ENCODE measurements at regions of chr3 and their contacts with region 1.

Region 1: DNA sequence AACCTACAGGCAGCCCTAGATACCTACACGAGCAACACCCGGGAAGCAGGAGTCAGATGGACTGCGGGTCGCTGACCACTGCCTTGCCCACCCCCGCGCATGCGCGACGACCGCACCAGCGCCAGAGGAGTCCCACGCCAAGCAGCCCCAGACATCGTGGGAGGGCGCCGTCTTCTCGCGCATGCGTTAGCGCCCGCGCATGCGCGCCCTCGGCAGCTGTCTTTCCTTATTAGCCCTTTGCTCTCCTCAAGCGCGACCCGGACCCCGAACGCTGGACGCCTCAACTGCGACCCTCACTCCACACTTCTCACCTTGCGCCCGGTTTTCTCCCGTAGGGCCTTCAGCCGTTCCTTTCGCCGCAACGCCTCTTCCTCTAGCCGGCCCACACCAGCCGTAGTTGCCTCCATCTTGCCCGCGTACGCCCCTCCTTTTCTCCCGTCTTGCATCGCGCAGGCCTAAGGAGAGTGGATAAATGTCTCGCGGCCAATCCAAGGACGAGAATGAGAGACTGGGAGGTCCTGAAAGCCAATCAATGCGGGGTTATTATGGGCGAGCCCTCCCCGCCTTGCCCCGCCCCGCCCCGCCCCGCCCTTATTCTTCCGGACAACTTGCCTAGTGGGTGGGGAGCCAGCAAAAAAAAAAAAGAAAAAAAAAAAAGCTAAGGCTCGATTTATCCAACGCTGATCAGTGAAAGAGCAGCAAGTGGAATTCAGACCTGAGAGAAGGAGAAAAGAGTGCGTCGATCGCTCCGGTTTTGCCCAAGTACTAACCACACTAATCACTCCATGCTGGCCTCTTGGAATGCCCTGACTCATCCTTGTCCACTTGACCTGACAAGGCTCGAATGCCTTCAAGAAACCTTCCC is at the start of gene CCDC12:
- DNase-seq: peak; percentile 98
- ATAC-seq: peak; percentile 75
- H3K4me3 ChIP-seq: peak within 1 kb of the TSS; percentile 63 to 91 (median 85)
- H3K4me3 Mint-ChIP-seq: peak within 1 kb of the TSS; percentile 96
- H3K27ac ChIP-seq: peak within 1 kb of the TSS; percentile 75 to 88
- H3K27ac Mint-ChIP-seq: peak within 1 kb of the TSS; percentile 97
- H3K4me1 ChIP-seq: peaks cover 69 to 87% of the 10 kb centered on the region in 2 donors
- H3K4me1 Mint-ChIP-seq: peaks cover 69% of the 10 kb centered on the region
- H3K27me3 ChIP-seq: no peaks in the 10 kb centered on the region
- H3K27me3 Mint-ChIP-seq: no peaks in the 10 kb centered on the region
- CTCF ChIP-seq: no peak
- total RNA-seq, gene CCDC12: 97.3 and 99.0 TPM in 2 replicates

Region 2: DNA sequence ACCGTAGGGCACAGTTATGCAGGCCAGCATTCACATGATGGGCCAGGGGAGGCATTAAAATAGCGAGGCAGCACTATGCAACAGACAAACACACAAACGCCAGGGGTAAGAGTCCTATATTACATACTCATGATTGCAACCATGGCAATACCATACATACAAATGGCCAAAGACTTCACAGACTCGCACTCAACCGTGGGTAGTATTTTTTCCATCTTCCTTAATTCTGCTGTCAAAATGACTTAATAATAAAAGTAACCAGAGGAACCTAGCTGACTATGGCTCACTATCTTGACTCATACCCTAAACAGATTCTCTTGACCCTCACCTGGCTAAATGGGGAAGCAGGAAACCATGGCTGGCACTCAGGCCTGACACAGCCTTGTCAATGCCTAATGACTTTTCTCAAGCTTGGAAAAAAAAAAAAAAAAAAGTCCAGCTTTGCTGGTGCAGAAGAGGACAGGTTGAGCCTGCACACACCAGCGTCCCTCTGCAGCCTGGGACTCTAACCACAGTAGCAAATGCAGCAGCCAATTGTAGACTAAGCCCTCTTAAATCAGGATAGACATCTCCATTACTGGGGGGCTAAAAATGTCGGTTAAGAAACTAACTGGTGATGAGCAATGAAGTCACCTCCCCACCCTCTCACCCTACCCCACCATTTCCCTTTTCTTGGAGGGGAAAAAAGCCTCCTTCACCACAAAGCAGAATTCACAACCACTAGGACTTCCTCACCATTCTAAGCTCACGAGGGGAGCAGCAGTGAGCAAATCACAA is 23.1 kb before region 1 on chr3:
- CTCF ChIA-PET with region 1: no interaction called
- POLR2A ChIA-PET with region 1: interaction called, 6 read pairs
- intact Hi-C with region 1: loop called (anchors 1 kb)
- DNase-seq: peak; percentile 69
- ATAC-seq: peak; percentile 75
- H3K4me3 ChIP-seq: no peak overlapping the region
- H3K4me3 Mint-ChIP-seq: peak overlapping the region; percentile 64
- H3K27ac ChIP-seq: peak overlapping the region; percentile 66 to 83
- H3K27ac Mint-ChIP-seq: peak overlapping the region; percentile 80
- H3K4me1 ChIP-seq: peaks cover 75 to 89% of the 10 kb centered on the region in 2 donors
- H3K4me1 Mint-ChIP-seq: peaks cover 88% of the 10 kb centered on the region
- H3K27me3 ChIP-seq: no peaks in the 10 kb centered on the region
- H3K27me3 Mint-ChIP-seq: no peaks in the 10 kb centered on the region
- CTCF ChIP-seq: no peak

Region 3: DNA sequence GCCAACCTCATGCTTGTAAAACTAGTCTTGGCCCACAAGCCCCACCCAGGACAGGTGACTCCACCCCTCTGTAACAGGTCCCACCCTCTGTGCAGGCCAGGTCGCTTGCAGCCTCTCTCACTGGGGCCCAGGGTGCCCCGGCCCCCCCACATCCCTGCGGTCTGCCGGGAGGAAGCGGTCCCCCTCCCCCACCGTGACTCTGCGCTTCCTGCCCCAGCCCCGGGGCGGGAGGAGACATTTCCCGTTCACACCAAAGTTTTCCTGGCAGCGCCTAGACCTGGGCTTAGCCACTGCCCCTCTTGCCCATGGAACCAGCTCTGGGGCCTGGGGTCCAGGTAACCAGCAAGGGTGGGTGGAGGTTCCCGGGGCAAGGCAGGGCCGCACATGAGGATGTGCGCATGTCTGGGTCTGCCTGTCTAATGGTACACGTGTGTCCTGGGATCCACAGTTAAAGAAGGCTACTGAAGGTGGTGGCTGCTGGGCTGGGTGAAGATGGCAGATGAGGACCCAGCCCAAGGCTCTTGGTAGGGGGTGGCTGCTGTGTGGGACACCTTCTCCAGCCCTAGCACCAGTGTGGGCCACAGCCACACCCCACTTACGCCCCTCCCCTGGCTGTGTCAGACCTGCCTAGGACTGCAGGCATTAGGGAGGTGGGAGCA is 11.3 kb after region 1 on chr3:
- CTCF ChIA-PET with region 1: interaction called, 10 read pairs
- POLR2A ChIA-PET with region 1: interaction called, 6 read pairs
- intact Hi-C with region 1: loop called (anchors 1 kb)
- DNase-seq: peak; percentile 86
- ATAC-seq: peak; percentile 89
- H3K4me3 ChIP-seq: peak overlapping the region in 4 of 5 experiments; percentile 21 to 41 (median 29)
- H3K4me3 Mint-ChIP-seq: peak overlapping the region; percentile 70
- H3K27ac ChIP-seq: peak overlapping the region; percentile 36 to 64
- H3K27ac Mint-ChIP-seq: peak overlapping the region; percentile 90
- H3K4me1 ChIP-seq: peaks cover 50 to 59% of the 10 kb centered on the region in 2 donors
- H3K4me1 Mint-ChIP-seq: peaks cover 71% of the 10 kb centered on the region
- H3K27me3 ChIP-seq: no peaks in the 10 kb centered on the region
- H3K27me3 Mint-ChIP-seq: no peaks in the 10 kb centered on the region
- CTCF ChIP-seq: no peak

Region 4: DNA sequence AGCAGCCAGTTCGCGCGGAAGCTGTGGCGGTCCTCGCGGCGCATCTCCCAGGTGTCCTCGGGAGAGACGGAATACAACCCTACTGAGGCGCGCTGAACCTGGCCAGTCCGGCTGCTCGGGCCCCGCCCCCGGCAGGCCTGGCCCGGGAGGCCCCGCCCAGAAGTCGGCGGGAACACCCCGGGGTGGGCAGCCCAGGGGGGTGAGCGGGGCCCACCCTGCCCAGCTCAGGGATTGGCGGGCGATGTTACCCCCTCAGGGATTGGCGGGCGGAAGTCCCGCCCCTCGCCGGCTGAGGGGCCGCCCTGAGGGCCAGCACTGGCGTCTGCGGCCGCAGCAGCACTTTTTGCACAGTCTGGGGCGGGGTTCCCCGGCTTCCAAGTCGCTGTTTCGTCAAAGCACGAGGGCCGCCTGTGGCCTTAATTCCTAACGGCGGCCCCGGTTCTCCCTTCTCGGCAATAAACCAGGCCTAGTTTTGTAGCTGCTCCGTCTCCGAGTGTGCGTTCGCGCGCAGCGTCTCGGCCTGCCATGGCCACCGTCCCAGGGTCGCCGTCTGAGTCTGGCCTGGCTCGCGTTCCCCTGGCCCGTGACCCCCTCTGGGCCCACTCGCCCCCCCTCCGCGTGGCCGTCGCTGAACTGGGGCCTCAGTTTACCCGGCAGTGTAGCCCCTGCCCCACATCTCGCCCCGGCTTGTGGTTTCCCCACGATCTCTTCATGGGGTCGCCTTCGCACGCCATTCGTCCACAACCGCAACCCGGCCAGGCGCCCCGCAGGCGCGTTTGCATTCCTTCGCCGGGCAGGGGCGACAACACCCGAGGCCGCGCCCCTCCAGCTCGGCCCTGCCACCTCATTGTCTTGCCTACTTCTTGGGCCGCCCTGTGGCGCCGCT is 32.9 kb after region 1 on chr3:
- CTCF ChIA-PET with region 1: interaction called, 3 read pairs
- POLR2A ChIA-PET with region 1: interaction called, 6 read pairs
- intact Hi-C with region 1: loop called (anchors 1 kb)
- DNase-seq: peak; percentile 88
- ATAC-seq: peak; percentile 97
- H3K4me3 ChIP-seq: peak overlapping the region in 4 of 5 experiments; percentile 50 to 68 (median 64)
- H3K4me3 Mint-ChIP-seq: peak overlapping the region; percentile 86
- H3K27ac ChIP-seq: peak overlapping the region; percentile 24 to 90
- H3K27ac Mint-ChIP-seq: peak overlapping the region; percentile 86
- H3K4me1 ChIP-seq: peaks cover 6 to 17% of the 10 kb centered on the region in 2 donors
- H3K4me1 Mint-ChIP-seq: peaks cover 10% of the 10 kb centered on the region
- H3K27me3 ChIP-seq: no peaks in the 10 kb centered on the region
- H3K27me3 Mint-ChIP-seq: no peaks in the 10 kb centered on the region
- CTCF ChIP-seq: no peak

Region 5: GRCh38 chr3:47270526-47270925 is 294.0 kb after region 1 on chr3:
- CTCF ChIA-PET with region 1: no interaction called
- POLR2A ChIA-PET with region 1: no interaction called
- intact Hi-C with region 1: no loop called
- DNase-seq: no peak
- ATAC-seq: no peak
- H3K4me3 ChIP-seq: no peak overlapping the region
- H3K4me3 Mint-ChIP-seq: no peak overlapping the region
- H3K27ac ChIP-seq: no peak overlapping the region
- H3K27ac Mint-ChIP-seq: no peak overlapping the region
- H3K4me1 ChIP-seq: peaks cover 4 to 7% of the 10 kb centered on the region in 2 donors
- H3K4me1 Mint-ChIP-seq: peaks cover 9% of the 10 kb centered on the region
- H3K27me3 ChIP-seq: no peaks in the 10 kb centered on the region
- H3K27me3 Mint-ChIP-seq: no peaks in the 10 kb centered on the region
- CTCF ChIP-seq: no peak

Region 6: DNA sequence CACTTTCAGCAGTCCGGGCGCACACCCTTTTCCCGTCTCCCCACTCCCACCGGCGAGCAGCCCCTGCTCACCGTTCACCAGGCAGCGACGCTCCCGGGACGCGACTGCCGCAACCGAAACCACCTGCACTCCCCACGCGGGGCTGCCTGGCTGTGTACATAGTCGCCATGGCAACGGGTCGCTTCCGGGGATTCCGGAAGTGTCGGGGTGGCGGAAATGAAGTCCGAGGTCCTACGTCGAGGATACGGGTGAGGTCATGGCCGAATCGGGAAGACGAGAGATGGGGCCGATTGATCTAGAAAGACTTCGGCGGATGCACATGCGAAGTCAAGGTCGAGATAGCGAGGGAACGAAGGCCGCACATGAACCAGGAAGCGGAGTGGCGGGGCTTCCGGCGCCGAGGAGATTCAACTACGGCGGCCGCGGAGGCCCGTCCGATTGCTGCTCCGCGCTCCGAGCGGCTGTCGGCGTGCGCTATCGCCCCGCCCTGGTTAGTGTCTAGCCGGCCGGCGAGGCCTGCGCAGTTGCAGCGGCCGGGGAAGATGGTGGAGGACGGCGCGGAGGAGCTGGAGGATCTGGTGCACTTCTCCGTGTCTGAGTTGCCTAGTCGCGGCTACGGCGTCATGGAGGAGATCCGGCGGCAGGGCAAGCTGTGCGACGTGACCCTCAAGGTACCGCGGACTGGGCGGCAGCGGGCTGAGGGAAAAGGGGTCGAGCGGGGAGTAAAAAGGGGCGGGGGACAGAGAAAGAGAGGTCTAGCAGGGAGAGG is 306.1 kb after region 1 on chr3 and contains the starts of genes KIF9 and KLHL18:
- CTCF ChIA-PET with region 1: no interaction called
- POLR2A ChIA-PET with region 1: no interaction called
- intact Hi-C with region 1: loop called (anchors 2 kb)
- DNase-seq: peak; percentile 100
- ATAC-seq: peak; percentile 85
- H3K4me3 ChIP-seq: peak within 1 kb of the TSS; percentile 74 to 98 (median 89)
- H3K4me3 Mint-ChIP-seq: peak within 1 kb of the TSS; percentile 99
- H3K27ac ChIP-seq: peak within 1 kb of the TSS; percentile 99
- H3K27ac Mint-ChIP-seq: peak within 1 kb of the TSS; percentile 100
- H3K4me1 ChIP-seq: peaks cover 33 to 49% of the 10 kb centered on the region in 2 donors
- H3K4me1 Mint-ChIP-seq: peaks cover 45% of the 10 kb centered on the region
- H3K27me3 ChIP-seq: no peaks in the 10 kb centered on the region
- H3K27me3 Mint-ChIP-seq: no peaks in the 10 kb centered on the region
- CTCF ChIP-seq: no peak
- total RNA-seq, gene KIF9: 1.3 and 3.0 TPM in 2 replicates
- total RNA-seq, gene KLHL18: 30.9 and 33.0 TPM in 2 replicates

Region 7: DNA sequence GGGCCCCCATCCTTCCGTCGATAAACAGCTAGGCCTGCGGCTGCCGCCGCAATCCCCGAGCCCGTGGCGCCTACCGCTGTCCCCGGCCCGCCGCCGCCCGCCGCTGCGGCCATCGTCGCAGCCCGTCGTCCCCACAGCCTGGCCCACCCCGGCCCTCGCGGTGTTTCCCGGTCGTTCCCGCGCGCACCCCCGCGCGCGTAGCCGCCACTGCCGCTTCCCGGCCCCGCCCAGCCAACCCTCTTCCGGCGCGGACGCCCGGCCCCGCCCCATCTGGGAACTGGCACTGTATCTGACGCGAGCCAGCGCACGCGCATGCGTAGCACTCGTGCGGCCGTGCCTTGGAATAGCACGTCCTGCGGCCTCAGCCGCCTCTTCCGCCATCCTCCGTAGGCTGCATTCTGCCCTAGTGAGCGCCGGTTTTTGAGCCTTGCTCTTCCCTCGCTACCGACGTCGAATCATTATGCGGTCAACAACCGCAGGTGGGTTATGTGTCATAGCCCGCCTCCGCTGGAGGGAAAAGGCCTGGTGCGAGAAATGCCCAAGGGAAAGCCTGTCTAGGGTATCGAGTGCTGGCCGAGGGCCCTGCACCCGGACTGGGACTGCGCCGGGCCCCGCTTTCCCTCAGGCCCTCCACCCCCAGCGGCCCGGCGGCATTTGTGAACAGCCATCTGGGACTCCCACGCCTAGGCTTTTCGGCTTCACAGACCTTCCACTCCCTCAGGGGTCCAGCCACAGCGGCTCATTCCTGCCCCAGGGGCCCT is 805.3 kb after region 1 on chr3 and contains the start of gene SMARCC1:
- CTCF ChIA-PET with region 1: no interaction called
- POLR2A ChIA-PET with region 1: interaction called, 3 read pairs
- intact Hi-C with region 1: loop called (anchors 5 kb)
- DNase-seq: peak; percentile 99
- ATAC-seq: peak; percentile 87
- H3K4me3 ChIP-seq: peak within 1 kb of the TSS; percentile 68 to 94 (median 78)
- H3K4me3 Mint-ChIP-seq: peak within 1 kb of the TSS; percentile 99
- H3K27ac ChIP-seq: peak within 1 kb of the TSS; percentile 91 to 96
- H3K27ac Mint-ChIP-seq: peak within 1 kb of the TSS; percentile 99
- H3K4me1 ChIP-seq: peaks cover 32 to 44% of the 10 kb centered on the region in 2 donors
- H3K4me1 Mint-ChIP-seq: peaks cover 39% of the 10 kb centered on the region
- H3K27me3 ChIP-seq: no peaks in the 10 kb centered on the region
- H3K27me3 Mint-ChIP-seq: no peaks in the 10 kb centered on the region
- CTCF ChIP-seq: no peak
- total RNA-seq, gene SMARCC1: 149 and 155 TPM in 2 replicates